Endothelial cell of umbilical vein (primary cell): ENCODE measurements at regions of chr12 and their contacts with region 1.

Region 1: GRCh38 chr12:63917864-63918799 is 73.6 kb downstream of the SRGAP1 start:
- DNase-seq: peak; percentile 83
- H3K4me3 ChIP-seq: peak overlapping the region in 1 of 3 experiments; percentile 15
- H3K27ac ChIP-seq: peak overlapping the region; percentile 89
- H3K4me1 ChIP-seq: peaks cover 56% of the 10 kb centered on the region
- H3K27me3 ChIP-seq: no peaks in the 10 kb centered on the region
- CTCF ChIP-seq: no peak
- POLR2A ChIP-seq: no peak

Region 2: GRCh38 chr12:63897931-63898330 is 20.2 kb before region 1 on chr12:
- CTCF ChIA-PET with region 1: interaction called, 12 read pairs
- POLR2A ChIA-PET with region 1: no interaction called
- dilution Hi-C with region 1: no loop called
- intact Hi-C with region 1: loop called (anchors 1 kb)
- DNase-seq: peak; percentile 92
- H3K4me3 ChIP-seq: peak overlapping the region in 1 of 3 experiments; percentile 63
- H3K27ac ChIP-seq: peak overlapping the region; percentile 96
- H3K4me1 ChIP-seq: peaks cover 16% of the 10 kb centered on the region
- H3K27me3 ChIP-seq: no peaks in the 10 kb centered on the region
- CTCF ChIP-seq: no peak
- POLR2A ChIP-seq: no peak

Region 3: GRCh38 chr12:63940310-63941005 is 22.3 kb after region 1 on chr12:
- CTCF ChIA-PET with region 1: no interaction called
- POLR2A ChIA-PET with region 1: no interaction called
- dilution Hi-C with region 1: no loop called
- intact Hi-C with region 1: loop called (anchors 1 kb)
- DNase-seq: peak; percentile 76
- H3K4me3 ChIP-seq: no peak overlapping the region
- H3K27ac ChIP-seq: peak overlapping the region; percentile 13
- H3K4me1 ChIP-seq: peaks cover 18% of the 10 kb centered on the region
- H3K27me3 ChIP-seq: no peaks in the 10 kb centered on the region
- CTCF ChIP-seq: no peak
- POLR2A ChIP-seq: no peak

Region 4: GRCh38 chr12:64181504-64182291 is 263.6 kb after region 1 on chr12:
- CTCF ChIA-PET with region 1: no interaction called
- POLR2A ChIA-PET with region 1: no interaction called
- dilution Hi-C with region 1: no loop called
- intact Hi-C with region 1: loop called (anchors 1 kb)
- DNase-seq: peak; percentile 87
- H3K4me3 ChIP-seq: peak overlapping the region in 1 of 3 experiments; percentile 30
- H3K27ac ChIP-seq: peak overlapping the region; percentile 85
- H3K4me1 ChIP-seq: peaks cover 53% of the 10 kb centered on the region
- H3K27me3 ChIP-seq: no peaks in the 10 kb centered on the region
- CTCF ChIP-seq: peak; percentile 24 to 57
- POLR2A ChIP-seq: no peak